ENCODE measurements at regions of chr10 and their contacts with region 1.

Region 1: DNA sequence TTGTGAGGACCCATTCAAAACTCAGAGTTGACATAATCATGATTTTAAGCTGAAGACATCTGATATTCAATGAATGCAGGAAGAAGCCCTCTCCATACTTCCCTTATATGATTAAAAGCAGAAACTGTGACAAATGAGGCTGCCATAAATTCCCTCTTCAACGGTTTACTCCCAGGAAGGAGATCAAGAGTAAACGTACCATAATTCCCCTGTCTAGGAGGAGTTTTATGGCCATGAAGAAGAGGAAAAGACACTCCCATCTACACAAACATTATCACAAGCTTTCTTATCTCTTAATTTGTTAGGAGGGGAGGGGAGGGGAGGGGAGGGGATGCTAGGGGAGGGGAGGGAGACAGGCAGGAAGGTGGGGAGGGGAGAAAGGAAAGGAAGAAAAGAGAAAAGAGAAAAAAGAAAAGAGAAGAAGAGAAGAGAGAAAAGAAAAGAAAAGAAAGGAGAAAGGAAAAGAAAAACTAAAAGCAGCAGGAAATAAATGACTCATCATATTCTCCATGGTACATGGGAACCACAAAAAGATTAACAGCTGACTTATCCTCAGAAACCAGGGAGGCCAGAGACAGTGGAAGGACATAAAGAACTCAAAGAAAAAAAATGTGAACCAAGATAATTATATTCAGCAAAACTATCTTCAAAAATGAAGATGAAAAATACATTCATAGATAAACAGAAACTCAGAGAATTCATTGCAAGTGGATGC is 121.6 kb downstream of the ALOX5 start:
- DNase-seq: peak in 1 of 9 experiments; percentile 10
- ATAC-seq: no peak
- H3K4me3 ChIP-seq: no peak overlapping the region
- H3K4me3 Mint-ChIP-seq: no peak overlapping the region
- H3K27ac ChIP-seq: no peak overlapping the region
- H3K27ac Mint-ChIP-seq: no peak overlapping the region
- H3K4me1 ChIP-seq: no peaks in the 10 kb centered on the region
- H3K4me1 Mint-ChIP-seq: peaks cover 25% of the 10 kb centered on the region
- H3K27me3 ChIP-seq: no peaks in the 10 kb centered on the region
- H3K27me3 Mint-ChIP-seq: no peaks in the 10 kb centered on the region
- CTCF ChIP-seq: no peak

Region 2: GRCh38 chr10:45476559-45476958 is 19.0 kb before region 1 on chr10:
- CTCF ChIA-PET with region 1: no interaction called
- POLR2A ChIA-PET with region 1: no interaction called
- intact Hi-C with region 1: loop called in 1 of 2 experiments (anchors 2 kb)
- DNase-seq: no peak
- ATAC-seq: no peak
- H3K4me3 ChIP-seq: no peak overlapping the region
- H3K4me3 Mint-ChIP-seq: no peak overlapping the region
- H3K27ac ChIP-seq: no peak overlapping the region
- H3K27ac Mint-ChIP-seq: no peak overlapping the region
- H3K4me1 ChIP-seq: no peaks in the 10 kb centered on the region
- H3K4me1 Mint-ChIP-seq: peaks cover 13% of the 10 kb centered on the region
- H3K27me3 ChIP-seq: no peaks in the 10 kb centered on the region
- H3K27me3 Mint-ChIP-seq: no peaks in the 10 kb centered on the region
- CTCF ChIP-seq: no peak

Measured in CD8-positive, alpha-beta T cell (primary cell).